ENCODE measurements at regions of chr15 and their contacts with region 1.

Region 1: GRCh38 chr15:55649054-55649423 is 60.9 kb upstream of the PYGO1 start:
- DNase-seq: no peak
- H3K4me3 ChIP-seq: no peak overlapping the region
- H3K27ac ChIP-seq: no peak overlapping the region
- H3K4me1 ChIP-seq: no peaks in the 10 kb centered on the region
- H3K27me3 ChIP-seq: no peaks in the 10 kb centered on the region
- CTCF ChIP-seq: no peak
- POLR2A ChIP-seq: no peak

Region 2: GRCh38 chr15:55784286-55784685 is 135.2 kb after region 1 on chr15:
- intact Hi-C with region 1: no loop called
- DNase-seq: no peak
- H3K4me3 ChIP-seq: no peak overlapping the region
- H3K27ac ChIP-seq: no peak overlapping the region
- H3K4me1 ChIP-seq: no peaks in the 10 kb centered on the region
- H3K27me3 ChIP-seq: no peaks in the 10 kb centered on the region
- CTCF ChIP-seq: no peak
- POLR2A ChIP-seq: no peak

Region 3: GRCh38 chr15:55799291-55800212 is 150.5 kb after region 1 on chr15:
- intact Hi-C with region 1: loop called (anchors 5 kb)
- DNase-seq: peak; percentile 78 to 81
- H3K4me3 ChIP-seq: no peak overlapping the region
- H3K27ac ChIP-seq: no peak overlapping the region
- H3K4me1 ChIP-seq: peaks cover 14 to 16% of the 10 kb centered on the region in 2 donors
- H3K27me3 ChIP-seq: no peaks in the 10 kb centered on the region
- CTCF ChIP-seq: peak in 5 of 6 experiments; percentile 36 to 84 (median 71)
- POLR2A ChIP-seq: no peak

Region 4: GRCh38 chr15:55846116-55846707 is 197.2 kb after region 1 on chr15:
- intact Hi-C with region 1: loop called (anchors 5 kb)
- DNase-seq: peak; percentile 23 to 26
- H3K4me3 ChIP-seq: no peak overlapping the region
- H3K27ac ChIP-seq: no peak overlapping the region
- H3K4me1 ChIP-seq: no peaks in the 10 kb centered on the region
- H3K27me3 ChIP-seq: no peaks in the 10 kb centered on the region
- CTCF ChIP-seq: peak; percentile 83 to 91 (median 84)
- POLR2A ChIP-seq: no peak